Psoas muscle (tissue), 8 donors: ENCODE measurements at regions of chr1 and their contacts with region 1.

Region 1: DNA sequence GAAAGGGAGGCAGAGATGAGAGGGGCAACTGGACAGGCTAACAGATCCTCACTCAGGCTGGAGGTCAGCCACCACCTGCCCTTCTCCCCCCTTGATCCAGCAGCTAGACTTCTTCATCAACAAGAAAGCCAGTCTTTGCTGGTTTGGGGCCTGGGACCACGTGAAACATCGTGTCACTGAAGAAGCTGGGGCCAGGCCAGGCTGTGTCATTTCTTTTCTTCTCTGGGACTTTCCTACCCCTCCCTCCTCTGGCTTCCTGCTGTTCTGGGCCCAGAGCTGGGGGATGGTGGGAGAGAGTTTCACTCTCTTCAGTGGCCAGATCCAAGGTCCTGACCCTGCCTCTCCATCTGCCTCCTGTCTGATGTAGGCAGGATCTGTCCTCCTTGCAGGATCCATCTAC is 18.1 kb upstream of the SLC26A9 start:
- DNase-seq: no peak
- ATAC-seq: peak in 2 of 4 donors; percentile 47 to 53
- H3K4me3 ChIP-seq: no peak overlapping the region
- H3K27ac ChIP-seq: no peak overlapping the region
- H3K4me1 ChIP-seq: peaks cover 18% of the 10 kb centered on the region
- H3K27me3 ChIP-seq: no peaks in the 10 kb centered on the region
- CTCF ChIP-seq: no peak

Region 2: GRCh38 chr1:205925730-205926129 is 35.7 kb before region 1 on chr1:
- intact Hi-C with region 1: loop called in 1 of 2 experiments (anchors 5 kb)
- DNase-seq: no peak
- ATAC-seq: peak in 3 of 4 donors; percentile 46 to 64 (median 49)
- H3K4me3 ChIP-seq: no peak overlapping the region
- H3K27ac ChIP-seq: peak overlapping the region; percentile 64
- H3K4me1 ChIP-seq: peaks cover 6% of the 10 kb centered on the region
- H3K27me3 ChIP-seq: peaks cover 0 to 4% (median 0%) of the 10 kb centered on the region in 3 donors
- CTCF ChIP-seq: no peak

Region 3: GRCh38 chr1:205998457-205999241 is 37.2 kb after region 1 on chr1:
- intact Hi-C with region 1: no loop called
- DNase-seq: peak in 1 of 2 donors; percentile 68
- ATAC-seq: peak; percentile 84 to 92 (median 88)
- H3K4me3 ChIP-seq: no peak overlapping the region
- H3K27ac ChIP-seq: peak overlapping the region; percentile 78
- H3K4me1 ChIP-seq: peaks cover 32% of the 10 kb centered on the region
- H3K27me3 ChIP-seq: no peaks in the 10 kb centered on the region
- CTCF ChIP-seq: no peak